Activated CD4-positive, alpha-beta memory T cell treated with anti-CD3 and anti-CD28 coated beads, Interleukin-2, amount 10 ng/mL, durations not matched to agents 7 days and 5 days (primary cell): ENCODE measurements at regions of chr6 and their contacts with region 1.

Region 1: GRCh38 chr6:43143235-43144124 is 27.6 kb upstream of the SRF start:
- DNase-seq: peak; percentile 79
- H3K4me3 Mint-ChIP-seq: no peak overlapping the region
- H3K27ac Mint-ChIP-seq: no peak overlapping the region
- H3K4me1 Mint-ChIP-seq: peaks cover 10% of the 10 kb centered on the region
- H3K27me3 Mint-ChIP-seq: no peaks in the 10 kb centered on the region

Region 2: GRCh38 chr6:42901536-42901957 is 241.9 kb before region 1 on chr6:
- CTCF ChIA-PET with region 1: interaction called, 13 read pairs
- POLR2A ChIA-PET with region 1: no interaction called
- DNase-seq: peak; percentile 74
- H3K4me3 Mint-ChIP-seq: no peak overlapping the region
- H3K27ac Mint-ChIP-seq: no peak overlapping the region
- H3K4me1 Mint-ChIP-seq: peaks cover 13% of the 10 kb centered on the region
- H3K27me3 Mint-ChIP-seq: peaks cover 2% of the 10 kb centered on the region

Region 3: GRCh38 chr6:42907336-42907735 is 236.1 kb before region 1 on chr6:
- CTCF ChIA-PET with region 1: interaction called, 11 read pairs
- POLR2A ChIA-PET with region 1: no interaction called
- DNase-seq: no peak
- H3K4me3 Mint-ChIP-seq: no peak overlapping the region
- H3K27ac Mint-ChIP-seq: no peak overlapping the region
- H3K4me1 Mint-ChIP-seq: peaks cover 2% of the 10 kb centered on the region
- H3K27me3 Mint-ChIP-seq: peaks cover 5% of the 10 kb centered on the region

Region 4: DNA sequence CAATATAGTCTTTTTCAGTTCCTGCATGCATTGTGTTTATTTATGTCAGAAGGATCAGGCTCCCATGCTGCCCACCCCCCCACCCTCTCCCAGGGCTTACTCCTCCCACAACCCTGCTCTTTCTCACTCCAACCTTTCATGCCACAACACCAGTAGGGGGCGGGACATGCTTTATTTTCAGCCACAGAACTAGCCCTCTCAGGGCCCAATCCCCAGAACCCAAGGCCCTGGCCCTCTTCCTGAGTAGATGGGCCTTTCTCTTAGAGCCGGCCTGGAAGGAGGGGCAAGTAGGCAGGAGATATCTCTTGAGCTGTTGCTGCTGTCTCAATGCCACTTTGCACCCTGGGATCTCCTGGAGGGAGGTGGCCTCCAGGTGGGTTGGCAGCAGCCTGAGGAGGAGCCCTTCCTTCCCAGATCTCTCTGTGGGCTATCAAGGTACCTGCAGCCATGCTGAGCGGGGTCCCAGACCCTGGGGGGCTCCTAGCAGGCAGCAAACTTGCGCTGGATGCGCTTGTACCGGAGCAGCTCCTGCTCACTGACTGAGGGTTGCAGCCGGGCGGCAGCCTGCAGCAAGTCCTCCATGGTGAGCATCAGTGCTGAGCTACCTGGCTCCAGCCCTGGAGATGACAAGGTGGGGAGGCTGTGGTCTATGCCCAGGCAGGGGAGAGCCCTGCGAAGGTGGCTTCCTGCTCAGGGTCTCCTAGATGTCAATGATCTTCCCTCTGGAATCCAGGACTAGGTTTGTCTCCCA is 179.4 kb before region 1 on chr6:
- CTCF ChIA-PET with region 1: interaction called, 15 read pairs
- POLR2A ChIA-PET with region 1: no interaction called
- DNase-seq: peak; percentile 52
- H3K4me3 Mint-ChIP-seq: no peak overlapping the region
- H3K27ac Mint-ChIP-seq: no peak overlapping the region
- H3K4me1 Mint-ChIP-seq: peaks cover 13% of the 10 kb centered on the region
- H3K27me3 Mint-ChIP-seq: peaks cover 3% of the 10 kb centered on the region

Region 5: GRCh38 chr6:42984001-42984923 is 159.2 kb before region 1 on chr6 and contains the start of gene PPP2R5D:
- CTCF ChIA-PET with region 1: interaction called, 10 read pairs
- POLR2A ChIA-PET with region 1: interaction called, 5 read pairs
- DNase-seq: peak; percentile 99
- H3K4me3 Mint-ChIP-seq: peak within 1 kb of the TSS; percentile 88
- H3K27ac Mint-ChIP-seq: peak within 1 kb of the TSS; percentile 82
- H3K4me1 Mint-ChIP-seq: peaks cover 55% of the 10 kb centered on the region
- H3K27me3 Mint-ChIP-seq: no peaks in the 10 kb centered on the region
- total RNA-seq, gene PPP2R5D: 56.8 to 59.3 TPM

Region 6: DNA sequence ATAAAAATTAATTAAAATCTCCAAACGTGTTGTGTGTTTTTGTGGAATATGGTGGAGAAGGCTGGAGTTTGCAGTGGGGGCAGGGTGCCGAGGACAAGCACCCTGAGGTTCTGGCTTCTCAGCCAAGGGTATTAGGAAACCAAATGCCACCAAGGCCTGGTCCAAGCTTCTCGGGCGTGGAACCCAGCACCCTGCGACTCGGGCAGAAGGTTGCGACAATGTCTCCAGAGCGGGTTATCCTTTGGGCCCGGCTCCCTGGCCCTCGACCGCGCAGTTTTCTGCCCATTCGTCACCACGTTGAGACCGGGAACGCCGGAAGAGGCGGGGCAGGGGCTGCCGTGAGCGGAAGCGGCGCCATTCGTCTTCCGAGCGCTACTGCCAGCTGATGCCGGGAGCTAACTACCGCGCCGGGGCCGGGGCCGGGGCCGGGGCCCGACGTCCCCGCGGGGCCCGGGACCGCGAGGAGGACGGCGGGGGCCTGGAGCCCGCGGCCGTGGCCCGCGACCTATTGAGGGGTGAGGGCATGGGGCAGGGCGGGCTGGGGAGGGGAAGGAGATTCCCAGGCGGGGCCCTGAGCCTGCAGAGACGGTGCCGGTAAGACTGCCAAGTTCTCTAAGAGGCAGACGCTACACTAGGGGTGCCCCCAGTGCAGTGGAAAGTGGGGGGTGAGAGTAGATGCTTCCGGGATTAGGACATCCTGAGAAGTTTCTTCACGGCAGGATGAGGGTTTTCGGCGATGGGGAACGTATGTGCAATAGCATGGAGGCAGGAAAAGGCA is 122.0 kb before region 1 on chr6 and contains the start of gene RRP36:
- CTCF ChIA-PET with region 1: interaction called, 13 read pairs
- POLR2A ChIA-PET with region 1: no interaction called
- DNase-seq: peak; percentile 63
- H3K4me3 Mint-ChIP-seq: peak within 1 kb of the TSS; percentile 85
- H3K27ac Mint-ChIP-seq: peak within 1 kb of the TSS; percentile 79
- H3K4me1 Mint-ChIP-seq: peaks cover 46% of the 10 kb centered on the region
- H3K27me3 Mint-ChIP-seq: no peaks in the 10 kb centered on the region
- total RNA-seq, gene RRP36: 59.2 to 60.4 TPM